GM12878 (cell line): ENCODE measurements at regions of chr1 and their contacts with region 1.

Region 1: DNA sequence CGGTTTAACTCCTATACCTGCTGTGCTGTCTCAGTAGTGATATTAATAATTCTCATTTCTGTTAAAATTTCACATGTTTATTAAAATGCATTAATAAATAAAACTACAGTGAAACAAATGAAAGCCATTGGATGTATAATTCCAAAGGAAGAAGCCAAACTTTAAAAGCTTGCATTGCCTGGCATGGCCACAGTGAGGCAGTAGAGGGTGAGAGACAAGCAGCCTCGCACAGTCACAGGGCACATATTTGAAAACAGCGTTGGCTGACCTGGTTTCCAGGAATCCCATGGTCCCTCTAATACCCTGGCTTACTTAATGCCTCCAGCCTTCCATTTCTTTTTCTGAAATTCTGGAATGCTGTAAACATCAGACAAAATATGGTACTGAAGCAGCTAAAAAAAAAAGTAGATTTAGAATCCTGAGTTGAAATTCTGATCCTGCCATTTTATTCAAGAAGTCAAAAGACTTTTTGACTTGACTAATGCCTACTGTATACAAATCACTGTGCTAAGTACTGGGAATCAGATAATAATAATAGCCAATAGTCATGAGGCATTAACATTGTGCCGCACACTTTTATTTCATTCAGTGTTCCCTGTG is 6.7 kb upstream of the RNASEL start:
- DNase-seq: no peak
- ATAC-seq: peak; percentile 56
- H3K4me3 ChIP-seq: no peak overlapping the region
- H3K27ac ChIP-seq: no peak overlapping the region
- H3K4me1 ChIP-seq: peaks cover 4% of the 10 kb centered on the region; the same call in 1 of the 2 replicates
- H3K27me3 ChIP-seq: no peaks in the 10 kb centered on the region
- CTCF ChIP-seq: peak; percentile 87 to 91 (median 88)
- EP300 ChIP-seq: no peak
- POLR2A ChIP-seq: no peak
- RAD21 ChIP-seq: peak; percentile 92

Region 2: GRCh38 chr1:182084487-182085316 is 511.0 kb before region 1 on chr1:
- CTCF ChIA-PET with region 1: interaction called, 6 read pairs
- POLR2A ChIA-PET with region 1: no interaction called
- RAD21 ChIA-PET with region 1: no interaction called
- SMC1A ChIA-PET with region 1: interaction called, 11 read pairs
- in situ Hi-C with region 1: no loop called
- intact Hi-C with region 1: loop called (anchors 5 kb)
- DNase-seq: no peak
- ATAC-seq: peak; percentile 94
- H3K4me3 ChIP-seq: no peak overlapping the region
- H3K27ac ChIP-seq: no peak overlapping the region
- H3K4me1 ChIP-seq: no peaks in the 10 kb centered on the region
- H3K27me3 ChIP-seq: no peaks in the 10 kb centered on the region
- CTCF ChIP-seq: peak; percentile 67 to 75 (median 74)
- EP300 ChIP-seq: no peak
- POLR2A ChIP-seq: no peak
- RAD21 ChIP-seq: peak; percentile 89

Region 3: DNA sequence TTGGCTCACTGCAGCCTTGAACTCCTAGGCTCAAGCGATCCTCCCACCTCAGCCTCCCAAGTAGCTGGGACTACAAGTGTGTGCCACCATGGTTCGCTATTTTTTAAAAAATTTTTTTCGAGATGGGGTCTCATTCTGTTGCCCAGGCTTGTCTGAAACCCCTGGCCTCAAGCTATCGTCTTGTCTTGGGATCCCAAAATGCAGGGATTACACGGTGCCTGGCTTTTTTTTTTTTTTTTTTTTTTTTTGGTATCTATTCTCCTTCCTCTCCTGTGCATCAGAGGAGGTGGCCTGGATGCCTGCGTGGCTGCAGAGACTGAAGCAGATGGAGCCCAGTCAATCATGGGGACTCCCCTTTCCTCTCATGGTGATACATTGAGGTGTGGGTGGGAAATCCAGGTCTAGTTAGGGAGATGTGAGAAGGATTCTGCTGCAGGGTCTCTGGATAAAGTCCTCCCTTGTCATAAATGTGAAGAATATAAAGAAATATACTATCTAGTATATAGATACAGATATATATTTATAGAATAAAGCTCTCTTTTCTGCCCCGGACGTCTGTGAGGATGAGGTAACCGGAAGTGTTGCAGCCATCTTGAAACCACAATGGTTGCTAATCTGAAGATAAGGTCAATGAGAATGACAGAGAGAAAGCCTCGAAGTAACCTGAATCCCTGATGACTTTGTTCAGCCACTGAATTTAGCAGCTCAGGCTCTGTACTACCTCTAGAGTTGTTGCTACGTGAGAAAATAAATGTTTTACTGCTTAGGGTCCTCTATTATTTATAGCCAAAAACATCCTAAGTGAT is 165.3 kb before region 1 on chr1:
- CTCF ChIA-PET with region 1: interaction called, 8 read pairs
- POLR2A ChIA-PET with region 1: no interaction called
- RAD21 ChIA-PET with region 1: interaction called, 5 read pairs
- SMC1A ChIA-PET with region 1: interaction called, 12 read pairs
- in situ Hi-C with region 1: no loop called
- intact Hi-C with region 1: no loop called
- DNase-seq: peak; percentile 50
- ATAC-seq: peak; percentile 52
- H3K4me3 ChIP-seq: no peak overlapping the region
- H3K27ac ChIP-seq: peak overlapping the region; percentile 48
- H3K4me1 ChIP-seq: peaks cover 34% of the 10 kb centered on the region
- H3K27me3 ChIP-seq: no peaks in the 10 kb centered on the region
- CTCF ChIP-seq: no peak
- EP300 ChIP-seq: 0 out of 4 replicates have a peak, but pooled peaks of 1 of the 2 experiments have one; percentile 26
- POLR2A ChIP-seq: no peak
- RAD21 ChIP-seq: no peak

Region 4: GRCh38 chr1:182446033-182446669 is 149.6 kb before region 1 on chr1:
- CTCF ChIA-PET with region 1: interaction called, 31 read pairs
- POLR2A ChIA-PET with region 1: no interaction called
- RAD21 ChIA-PET with region 1: interaction called, 4 read pairs
- SMC1A ChIA-PET with region 1: interaction called, 13 read pairs
- in situ Hi-C with region 1: loop called (anchors 10 kb)
- intact Hi-C with region 1: loop called (anchors 1 kb)
- DNase-seq: peak; percentile 26
- ATAC-seq: peak; percentile 87
- H3K4me3 ChIP-seq: no peak overlapping the region
- H3K27ac ChIP-seq: no peak overlapping the region
- H3K4me1 ChIP-seq: peaks cover 15% of the 10 kb centered on the region
- H3K27me3 ChIP-seq: no peaks in the 10 kb centered on the region
- CTCF ChIP-seq: peak; percentile 60 to 80 (median 61)
- EP300 ChIP-seq: no peak
- POLR2A ChIP-seq: no peak
- RAD21 ChIP-seq: peak; percentile 90

Region 5: DNA sequence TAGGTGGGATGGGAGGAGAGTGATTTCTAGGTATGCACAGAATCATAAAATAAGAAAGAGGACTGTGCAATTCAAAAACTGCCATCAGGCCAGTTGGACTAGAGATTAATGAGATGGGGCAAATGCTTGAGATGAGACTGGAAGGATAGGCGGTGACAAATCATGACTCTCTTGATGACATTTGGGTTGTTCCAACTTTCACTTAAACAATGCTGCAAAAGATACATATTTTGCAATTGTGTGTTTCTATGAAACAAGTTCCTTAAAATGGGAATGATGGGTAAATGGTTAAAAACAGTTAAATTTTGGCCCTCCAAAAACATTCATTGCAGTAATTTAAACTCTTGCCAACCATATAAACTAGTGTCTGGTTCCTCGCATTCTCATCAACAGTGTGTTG is 61.8 kb before region 1 on chr1:
- CTCF ChIA-PET with region 1: no interaction called
- POLR2A ChIA-PET with region 1: no interaction called
- RAD21 ChIA-PET with region 1: no interaction called
- SMC1A ChIA-PET with region 1: no interaction called
- in situ Hi-C with region 1: no loop called
- intact Hi-C with region 1: no loop called
- DNase-seq: no peak
- ATAC-seq: no peak
- H3K4me3 ChIP-seq: no peak overlapping the region
- H3K27ac ChIP-seq: no peak overlapping the region
- H3K4me1 ChIP-seq: no peaks in the 10 kb centered on the region
- H3K27me3 ChIP-seq: no peaks in the 10 kb centered on the region
- CTCF ChIP-seq: no peak
- EP300 ChIP-seq: no peak
- POLR2A ChIP-seq: no peak
- RAD21 ChIP-seq: no peak

Region 6: GRCh38 chr1:182614796-182615454 is 19.2 kb after region 1 on chr1:
- CTCF ChIA-PET with region 1: interaction called, 119 read pairs
- POLR2A ChIA-PET with region 1: interaction called, 8 read pairs
- RAD21 ChIA-PET with region 1: interaction called, 121 read pairs
- SMC1A ChIA-PET with region 1: interaction called, 219 read pairs
- in situ Hi-C with region 1: no loop called
- intact Hi-C with region 1: no loop called
- DNase-seq: no peak
- ATAC-seq: peak; percentile 62
- H3K4me3 ChIP-seq: peak overlapping the region; percentile 63
- H3K27ac ChIP-seq: peak overlapping the region; percentile 95
- H3K4me1 ChIP-seq: peaks cover 66% of the 10 kb centered on the region
- H3K27me3 ChIP-seq: no peaks in the 10 kb centered on the region
- CTCF ChIP-seq: no peak
- EP300 ChIP-seq: peak in 1 of 2 experiments; percentile 54; a peak in 3 of 4 replicates
- POLR2A ChIP-seq: peak; percentile 84
- RAD21 ChIP-seq: peak; percentile 12; the same call in 1 of the 2 replicates

Region 7: DNA sequence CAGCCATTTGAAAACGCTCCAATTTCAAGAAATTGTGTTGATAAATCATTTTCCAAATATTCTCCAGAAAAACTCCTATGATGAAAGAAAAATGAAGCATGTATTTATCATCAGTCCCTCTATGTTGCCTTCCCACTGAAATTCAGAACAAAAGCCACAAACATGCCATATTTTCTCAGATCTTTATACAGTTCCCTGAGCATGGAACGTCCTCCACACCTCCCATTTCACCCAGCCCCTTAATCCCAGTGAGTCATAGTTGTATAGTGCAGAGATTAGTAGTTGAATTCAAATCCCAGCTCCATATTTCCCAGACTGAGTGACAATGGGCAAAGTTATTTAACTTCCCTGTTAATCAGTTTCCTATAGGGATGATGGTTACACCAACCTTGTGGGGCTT is 173.2 kb after region 1 on chr1:
- CTCF ChIA-PET with region 1: interaction called, 13 read pairs
- POLR2A ChIA-PET with region 1: no interaction called
- RAD21 ChIA-PET with region 1: interaction called, 16 read pairs
- SMC1A ChIA-PET with region 1: interaction called, 5 read pairs
- in situ Hi-C with region 1: no loop called
- intact Hi-C with region 1: no loop called
- DNase-seq: no peak
- ATAC-seq: no peak
- H3K4me3 ChIP-seq: no peak overlapping the region
- H3K27ac ChIP-seq: no peak overlapping the region
- H3K4me1 ChIP-seq: no peaks in the 10 kb centered on the region
- H3K27me3 ChIP-seq: no peaks in the 10 kb centered on the region
- CTCF ChIP-seq: no peak
- EP300 ChIP-seq: no peak
- POLR2A ChIP-seq: no peak
- RAD21 ChIP-seq: no peak

Region 8: DNA sequence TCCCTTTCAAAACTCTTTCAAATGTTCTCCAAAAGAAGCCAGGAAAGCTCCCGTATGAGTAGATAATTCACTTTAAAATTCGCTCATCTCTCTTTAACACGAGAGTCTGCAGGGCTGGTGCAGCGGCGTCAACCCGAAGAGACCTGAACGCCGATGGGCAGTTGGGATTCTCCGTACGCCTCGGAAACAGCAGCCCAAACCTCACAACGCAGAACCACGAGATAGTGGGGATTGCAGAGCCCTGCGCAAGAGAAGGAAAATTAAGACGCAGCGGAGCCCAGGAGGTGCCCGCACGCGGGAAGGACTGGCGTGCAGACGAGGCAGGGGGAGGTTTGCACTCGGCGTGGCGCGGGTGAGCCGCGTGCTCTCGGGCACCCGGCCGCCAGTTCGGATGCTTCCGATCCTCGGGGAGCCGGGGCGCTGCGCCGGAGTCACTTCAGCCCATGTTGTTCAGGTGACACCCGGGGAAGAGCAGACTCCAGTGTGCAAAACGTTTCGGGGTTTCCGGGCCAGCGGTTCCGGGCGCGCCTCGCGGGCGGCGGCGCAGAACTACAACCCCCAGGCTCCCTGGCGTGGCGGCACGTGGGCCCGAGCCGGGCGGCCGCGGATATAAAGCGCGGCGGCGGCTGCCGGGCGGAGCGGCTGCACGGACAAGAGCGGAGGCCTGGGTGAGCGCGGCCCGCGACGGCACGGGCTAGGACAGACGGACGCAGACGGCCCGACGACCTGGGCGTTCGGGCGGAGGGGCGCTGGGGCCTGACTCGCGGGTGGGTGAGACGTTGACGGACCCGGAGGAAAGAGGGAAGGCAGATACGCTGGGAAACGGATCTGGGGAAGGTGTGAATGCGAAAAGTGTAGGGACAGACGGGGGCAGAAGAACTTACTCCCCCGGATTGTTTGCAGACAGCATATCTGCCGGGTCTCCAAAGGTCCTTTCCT is 193.7 kb after region 1 on chr1 and contains the start of gene NPL:
- CTCF ChIA-PET with region 1: interaction called, 1,888 read pairs
- POLR2A ChIA-PET with region 1: interaction called, 6 read pairs
- RAD21 ChIA-PET with region 1: interaction called, 946 read pairs
- SMC1A ChIA-PET with region 1: interaction called, 1,145 read pairs
- in situ Hi-C with region 1: loop called (anchors 5 kb)
- intact Hi-C with region 1: no loop called
- DNase-seq: peak; percentile 34
- ATAC-seq: peak; percentile 97
- H3K4me3 ChIP-seq: peak within 1 kb of the TSS; percentile 59
- H3K27ac ChIP-seq: no peak within 1 kb of the TSS
- H3K4me1 ChIP-seq: peaks cover 7% of the 10 kb centered on the region; the same call in 1 of the 2 replicates
- H3K27me3 ChIP-seq: no peaks in the 10 kb centered on the region
- CTCF ChIP-seq: no peak
- EP300 ChIP-seq: no peak
- POLR2A ChIP-seq: peak; percentile 99
- RAD21 ChIP-seq: no peak
- polyA plus RNA-seq, gene NPL: 12.6 to 15.1 TPM

Region 9: DNA sequence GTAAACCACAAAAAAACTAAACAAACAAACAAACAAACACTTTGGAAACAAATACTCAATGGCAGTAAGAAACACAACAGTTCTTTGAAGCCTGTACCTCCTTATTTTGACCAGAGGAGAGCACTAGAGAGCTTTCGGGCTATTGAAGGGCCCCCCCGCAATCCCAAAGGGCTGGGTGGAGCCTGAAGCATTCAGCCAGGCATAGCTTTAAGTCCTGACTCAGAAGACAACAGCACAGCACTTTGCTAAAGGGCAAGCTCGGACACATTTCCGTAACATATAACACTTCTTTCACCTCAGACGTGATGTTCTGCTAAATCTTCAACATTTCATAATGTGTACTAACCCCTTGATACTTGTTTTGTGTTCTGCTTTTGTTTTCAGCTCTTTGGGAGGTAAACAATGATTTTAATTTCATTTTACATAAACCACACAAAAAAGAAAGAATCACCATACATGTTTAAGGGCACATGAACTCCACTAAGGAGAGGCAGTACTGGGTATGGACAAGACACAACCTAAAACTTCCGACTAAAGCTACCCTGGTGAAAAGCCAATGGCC is 366.9 kb after region 1 on chr1:
- CTCF ChIA-PET with region 1: no interaction called
- POLR2A ChIA-PET with region 1: no interaction called
- RAD21 ChIA-PET with region 1: no interaction called
- SMC1A ChIA-PET with region 1: no interaction called
- in situ Hi-C with region 1: no loop called
- intact Hi-C with region 1: no loop called
- DNase-seq: peak; percentile 62
- ATAC-seq: peak; percentile 100
- H3K4me3 ChIP-seq: peak overlapping the region; percentile 57; the same call in 1 of the 2 replicates
- H3K27ac ChIP-seq: peak overlapping the region; percentile 56
- H3K4me1 ChIP-seq: 0 out of 2 replicates have a peak, but pooled peaks cover 5% of the 10 kb centered on the region
- H3K27me3 ChIP-seq: no peaks in the 10 kb centered on the region
- CTCF ChIP-seq: peak; percentile 88 to 95 (median 93)
- EP300 ChIP-seq: no peak
- POLR2A ChIP-seq: peak; percentile 48; the same call in 1 of the 2 replicates
- RAD21 ChIP-seq: peak; percentile 99